Activated naive CD4-positive, alpha-beta T cell treated with anti-CD3 and anti-CD28 coated beads for 36 hours (primary cell): ENCODE measurements at regions of chr11 and their contacts with region 1.

Region 1: GRCh38 chr11:1202776-1203504 is 19.9 kb upstream of the MUC5B start:
- DNase-seq: peak; percentile 68
- H3K4me3 Mint-ChIP-seq: no peak overlapping the region
- H3K27ac Mint-ChIP-seq: no peak overlapping the region
- H3K4me1 Mint-ChIP-seq: no peaks in the 10 kb centered on the region
- H3K27me3 Mint-ChIP-seq: no peaks in the 10 kb centered on the region

Region 2: DNA sequence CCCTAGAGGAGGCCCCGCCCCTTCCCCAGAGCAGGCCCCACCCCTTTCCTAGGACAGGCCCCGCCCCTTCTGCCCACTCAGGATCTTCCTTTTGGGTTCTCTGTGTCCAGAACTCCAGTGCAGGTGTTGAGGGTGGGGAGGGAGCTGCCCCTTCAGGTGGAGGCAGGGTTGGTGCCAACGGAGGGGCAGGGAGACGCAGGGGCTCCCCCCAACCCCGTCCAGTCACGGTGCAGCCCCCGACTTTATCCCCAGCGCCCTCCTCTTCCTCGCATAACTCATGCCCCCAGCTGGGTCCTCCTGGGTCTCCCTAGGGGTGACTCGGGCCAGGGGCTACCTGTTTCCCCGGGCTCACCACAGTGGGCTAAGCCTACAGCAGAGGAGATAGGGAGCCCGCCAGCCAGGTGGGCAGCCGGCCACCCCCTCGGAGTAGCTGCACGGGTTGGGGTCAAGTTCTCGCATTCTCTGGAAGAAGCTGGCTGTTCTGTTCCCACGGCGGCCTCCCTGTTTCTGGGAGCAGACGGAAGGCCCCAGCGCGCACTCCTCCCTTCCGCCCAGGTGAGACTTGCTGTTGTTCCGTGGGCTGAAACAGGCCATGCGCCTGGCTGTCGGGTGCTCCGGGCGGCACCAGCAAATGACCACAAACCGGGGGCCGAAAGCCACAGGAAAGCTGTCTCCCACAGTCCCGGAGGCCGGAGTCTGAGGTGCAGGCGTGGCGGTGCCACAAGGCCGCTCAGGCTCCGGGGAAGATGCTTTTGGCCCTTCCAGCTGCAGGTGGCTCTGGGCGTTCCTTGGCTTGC is 89.3 kb before region 1 on chr11:
- CTCF ChIA-PET with region 1: no interaction called
- intact Hi-C with region 1: loop called (anchors 5 kb)
- DNase-seq: no peak
- H3K4me3 Mint-ChIP-seq: no peak overlapping the region
- H3K27ac Mint-ChIP-seq: no peak overlapping the region
- H3K4me1 Mint-ChIP-seq: no peaks in the 10 kb centered on the region
- H3K27me3 Mint-ChIP-seq: no peaks in the 10 kb centered on the region